Ascending aorta (tissue), 2 donors: ENCODE measurements at regions of chr19 and their contacts with region 1.

Region 1: GRCh38 chr19:11766597-11767591 is at the start of gene ZNF441:
- DNase-seq: peak; percentile 89 to 98
- H3K4me3 ChIP-seq: peak within 1 kb of the TSS; percentile 93 to 94
- H3K27ac ChIP-seq: peak within 1 kb of the TSS; percentile 91 to 95
- H3K4me1 ChIP-seq: peaks cover 0 to 11% of the 10 kb centered on the region in 2 donors
- H3K27me3 ChIP-seq: no peaks in the 10 kb centered on the region
- CTCF ChIP-seq: no peak
- total RNA-seq, gene ZNF441: 0.85 TPM

Region 2: GRCh38 chr19:11678504-11678903 is 88.4 kb before region 1 on chr19:
- intact Hi-C with region 1: no loop called
- DNase-seq: no peak
- H3K4me3 ChIP-seq: no peak overlapping the region
- H3K27ac ChIP-seq: no peak overlapping the region
- H3K4me1 ChIP-seq: no peaks in the 10 kb centered on the region
- H3K27me3 ChIP-seq: no peaks in the 10 kb centered on the region
- CTCF ChIP-seq: no peak

Region 3: DNA sequence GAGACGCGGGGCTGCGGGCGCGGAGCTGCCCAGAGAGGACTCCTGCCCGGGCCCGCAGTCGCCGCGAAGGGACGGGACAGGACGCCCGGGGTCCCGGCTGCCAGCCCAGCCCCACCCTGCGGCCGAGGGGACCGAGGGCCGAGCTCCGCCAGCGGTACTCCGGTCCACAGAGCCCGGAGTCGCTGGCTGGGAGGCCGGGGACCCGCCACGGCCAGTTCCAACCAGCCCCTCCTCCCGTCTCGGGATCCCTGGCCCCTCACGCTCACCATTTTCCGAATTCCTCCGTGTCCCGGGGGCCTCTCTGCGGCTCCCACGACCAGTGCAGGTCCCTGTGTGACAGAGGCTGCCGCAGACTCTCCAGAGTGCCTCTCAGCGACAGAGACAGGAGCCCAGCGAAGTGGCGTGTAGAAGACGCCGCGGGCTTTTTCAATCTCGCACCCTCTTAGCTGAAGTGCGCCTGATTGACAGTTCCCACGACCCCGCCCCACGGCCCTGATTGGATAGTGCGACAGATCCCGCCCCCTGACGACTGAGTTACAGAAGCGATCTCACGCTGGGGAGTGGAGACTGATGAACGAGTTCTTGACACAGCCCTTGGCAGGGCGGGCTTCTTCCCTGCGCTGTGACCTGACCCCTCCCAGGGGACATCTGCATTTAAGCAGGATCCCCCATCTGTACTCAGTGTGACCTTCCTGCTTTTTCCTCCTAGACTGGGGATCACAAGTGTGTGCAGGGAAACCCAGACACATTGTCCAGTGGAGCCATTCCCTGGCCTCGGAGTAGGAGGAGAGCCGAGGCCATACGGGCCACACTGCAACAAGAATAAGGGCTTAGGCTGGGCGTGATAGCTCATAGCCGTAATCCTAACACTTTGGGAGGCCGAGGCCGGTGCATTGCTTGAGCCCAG is 72.1 kb before region 1 on chr19:
- intact Hi-C with region 1: loop called (anchors 2 kb)
- DNase-seq: peak; percentile 89 to 96
- H3K4me3 ChIP-seq: peak overlapping the region; percentile 61 to 89
- H3K27ac ChIP-seq: peak overlapping the region in 1 of 2 donors; percentile 55
- H3K4me1 ChIP-seq: peaks cover 0 to 2% of the 10 kb centered on the region in 2 donors
- H3K27me3 ChIP-seq: no peaks in the 10 kb centered on the region
- CTCF ChIP-seq: no peak